Transverse colon (tissue), 4 donors: ENCODE measurements at regions of chr20 and their contacts with region 1.

Region 1: GRCh38 chr20:10741060-10741459 is 67.3 kb upstream of the JAG1 start:
- DNase-seq: no peak
- H3K4me3 ChIP-seq: no peak overlapping the region
- H3K27ac ChIP-seq: no peak overlapping the region
- H3K4me1 ChIP-seq: peaks cover 0 to 16% (median 3%) of the 10 kb centered on the region in 4 donors
- H3K27me3 ChIP-seq: no peaks in the 10 kb centered on the region
- CTCF ChIP-seq: no peak
- EP300 ChIP-seq: no peak
- POLR2A ChIP-seq: no peak

Region 2: GRCh38 chr20:10636326-10636818 is 104.7 kb before region 1 on chr20:
- in situ Hi-C with region 1: no loop called
- intact Hi-C with region 1: no loop called
- DNase-seq: no peak
- H3K4me3 ChIP-seq: no peak overlapping the region
- H3K27ac ChIP-seq: peak overlapping the region; percentile 66 to 78 (median 74)
- H3K4me1 ChIP-seq: peaks cover 17 to 52% (median 22%) of the 10 kb centered on the region in 4 donors
- H3K27me3 ChIP-seq: no peaks in the 10 kb centered on the region
- CTCF ChIP-seq: no peak
- EP300 ChIP-seq: no peak
- POLR2A ChIP-seq: no peak

Region 3: DNA sequence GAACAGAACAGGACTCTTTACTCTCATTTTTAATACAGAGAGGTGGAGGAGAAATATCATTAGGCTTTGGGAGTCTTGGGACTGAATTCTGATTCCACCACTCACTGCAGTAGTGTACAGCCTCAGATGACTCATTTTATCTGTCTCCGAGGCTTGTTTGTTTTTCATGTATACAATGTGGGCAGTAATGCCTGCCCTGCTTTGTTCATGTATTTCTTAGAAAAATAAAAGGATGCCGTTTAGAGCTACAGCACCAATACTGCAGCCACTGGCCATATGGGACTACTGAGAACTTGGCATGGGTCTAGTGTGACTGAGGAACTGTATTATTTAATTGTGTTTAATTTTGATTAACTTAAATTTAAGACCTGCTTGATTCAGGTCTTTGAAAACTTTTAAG is 26.0 kb before region 1 on chr20:
- in situ Hi-C with region 1: no loop called
- intact Hi-C with region 1: loop called (anchors 1 kb)
- DNase-seq: no peak
- H3K4me3 ChIP-seq: no peak overlapping the region
- H3K27ac ChIP-seq: no peak overlapping the region
- H3K4me1 ChIP-seq: peaks cover 14 to 49% (median 25%) of the 10 kb centered on the region in 4 donors
- H3K27me3 ChIP-seq: no peaks in the 10 kb centered on the region
- CTCF ChIP-seq: no peak
- EP300 ChIP-seq: no peak
- POLR2A ChIP-seq: no peak

Region 4: GRCh38 chr20:11076434-11077105 is 335.5 kb after region 1 on chr20:
- in situ Hi-C with region 1: no loop called
- intact Hi-C with region 1: no loop called
- DNase-seq: no peak
- H3K4me3 ChIP-seq: no peak overlapping the region
- H3K27ac ChIP-seq: no peak overlapping the region
- H3K4me1 ChIP-seq: no peaks in the 10 kb centered on the region
- H3K27me3 ChIP-seq: no peaks in the 10 kb centered on the region
- CTCF ChIP-seq: no peak
- EP300 ChIP-seq: no peak
- POLR2A ChIP-seq: no peak